ENCODE measurements at regions of chr1 and their contacts with region 1.

Region 1: GRCh38 chr1:45686317-45687013 is at the start of gene GPBP1L1:
- DNase-seq: peak; percentile 99
- ATAC-seq: peak; percentile 73
- H3K4me3 Mint-ChIP-seq: peak within 1 kb of the TSS; percentile 87
- H3K27ac Mint-ChIP-seq: peak within 1 kb of the TSS; percentile 95
- H3K4me1 Mint-ChIP-seq: peaks cover 52% of the 10 kb centered on the region
- H3K27me3 Mint-ChIP-seq: no peaks in the 10 kb centered on the region
- total RNA-seq, gene GPBP1L1: 101 to 112 TPM

Region 2: DNA sequence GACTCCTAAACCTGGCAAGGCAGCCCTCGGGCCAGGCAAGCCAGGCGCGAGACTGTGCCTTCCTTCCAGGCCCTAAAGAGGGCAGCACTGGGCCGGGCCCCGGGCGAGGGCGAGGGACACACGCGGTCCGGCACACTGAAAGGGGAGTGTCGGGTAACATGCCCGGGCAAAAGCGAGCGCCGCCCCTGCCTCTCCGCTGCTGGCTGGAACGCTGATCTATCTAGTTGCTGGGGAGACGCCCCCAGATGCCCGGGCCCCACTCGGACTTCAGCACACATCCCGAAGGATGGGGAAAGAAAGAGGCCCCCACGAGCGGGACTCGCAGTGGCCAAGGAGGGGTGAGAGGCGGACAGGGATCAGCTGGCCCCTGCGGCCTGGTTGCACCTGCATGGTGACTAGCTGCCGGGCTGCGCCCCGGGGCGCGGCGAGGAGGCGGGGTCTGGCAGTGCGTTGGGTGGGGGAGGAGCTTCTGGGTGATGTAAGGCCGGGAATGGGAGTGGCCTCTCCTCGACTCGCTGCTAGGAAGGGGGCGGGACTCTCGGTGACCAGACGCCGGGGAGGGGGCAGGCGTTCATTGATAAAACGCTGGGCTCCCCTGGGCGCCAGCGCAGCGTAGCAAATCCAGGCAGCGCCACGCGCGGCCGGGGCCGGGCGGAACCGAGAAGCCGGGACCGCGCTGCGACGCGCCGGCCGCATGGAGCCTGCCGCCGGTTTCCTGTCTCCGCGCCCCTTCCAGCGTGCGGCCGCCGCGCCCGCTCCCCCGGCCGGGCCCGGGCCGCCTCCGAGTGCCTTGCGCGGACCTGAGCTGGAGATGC is 886.5 kb before region 1 on chr1 and contains the start of gene PLK3:
- CTCF ChIA-PET with region 1: no interaction called
- POLR2A ChIA-PET with region 1: no interaction called
- intact Hi-C with region 1: loop called in 1 of 2 experiments (anchors 2 kb)
- DNase-seq: peak; percentile 99
- ATAC-seq: peak; percentile 84
- H3K4me3 Mint-ChIP-seq: peak within 1 kb of the TSS; percentile 87
- H3K27ac Mint-ChIP-seq: peak within 1 kb of the TSS; percentile 100
- H3K4me1 Mint-ChIP-seq: peaks cover 41% of the 10 kb centered on the region
- H3K27me3 Mint-ChIP-seq: no peaks in the 10 kb centered on the region
- total RNA-seq, gene PLK3: 52.1 to 52.7 TPM

Region 3: GRCh38 chr1:45266151-45266801 is 420.2 kb before region 1 on chr1:
- CTCF ChIA-PET with region 1: no interaction called
- POLR2A ChIA-PET with region 1: no interaction called
- intact Hi-C with region 1: no loop called
- DNase-seq: no peak
- ATAC-seq: no peak
- H3K4me3 Mint-ChIP-seq: no peak overlapping the region
- H3K27ac Mint-ChIP-seq: no peak overlapping the region
- H3K4me1 Mint-ChIP-seq: no peaks in the 10 kb centered on the region
- H3K27me3 Mint-ChIP-seq: peaks cover 4% of the 10 kb centered on the region

Region 4: GRCh38 chr1:45339789-45340570 is 346.5 kb before region 1 on chr1 and contains the starts of genes MUTYH and TOE1:
- CTCF ChIA-PET with region 1: interaction called, 3 read pairs
- POLR2A ChIA-PET with region 1: interaction called, 6 read pairs
- intact Hi-C with region 1: loop called in 1 of 2 experiments (anchors 1 kb)
- DNase-seq: peak; percentile 98
- ATAC-seq: peak; percentile 86
- H3K4me3 Mint-ChIP-seq: peak within 1 kb of the TSS; percentile 100
- H3K27ac Mint-ChIP-seq: peak within 1 kb of the TSS; percentile 100
- H3K4me1 Mint-ChIP-seq: peaks cover 27% of the 10 kb centered on the region
- H3K27me3 Mint-ChIP-seq: no peaks in the 10 kb centered on the region
- total RNA-seq, gene MUTYH: 48.6 to 53.7 TPM
- total RNA-seq, gene TOE1: 29.8 to 42.3 TPM

Region 5: GRCh38 chr1:45550401-45551351 is 135.8 kb before region 1 on chr1 and contains the start of gene AKR1A1:
- CTCF ChIA-PET with region 1: no interaction called
- POLR2A ChIA-PET with region 1: no interaction called
- intact Hi-C with region 1: loop called in 1 of 2 experiments (anchors 1 kb)
- DNase-seq: peak; percentile 95
- ATAC-seq: peak; percentile 94
- H3K4me3 Mint-ChIP-seq: peak within 1 kb of the TSS; percentile 94
- H3K27ac Mint-ChIP-seq: peak within 1 kb of the TSS; percentile 94
- H3K4me1 Mint-ChIP-seq: peaks cover 16% of the 10 kb centered on the region
- H3K27me3 Mint-ChIP-seq: no peaks in the 10 kb centered on the region
- total RNA-seq, gene AKR1A1: 140 to 181 TPM

Region 6: DNA sequence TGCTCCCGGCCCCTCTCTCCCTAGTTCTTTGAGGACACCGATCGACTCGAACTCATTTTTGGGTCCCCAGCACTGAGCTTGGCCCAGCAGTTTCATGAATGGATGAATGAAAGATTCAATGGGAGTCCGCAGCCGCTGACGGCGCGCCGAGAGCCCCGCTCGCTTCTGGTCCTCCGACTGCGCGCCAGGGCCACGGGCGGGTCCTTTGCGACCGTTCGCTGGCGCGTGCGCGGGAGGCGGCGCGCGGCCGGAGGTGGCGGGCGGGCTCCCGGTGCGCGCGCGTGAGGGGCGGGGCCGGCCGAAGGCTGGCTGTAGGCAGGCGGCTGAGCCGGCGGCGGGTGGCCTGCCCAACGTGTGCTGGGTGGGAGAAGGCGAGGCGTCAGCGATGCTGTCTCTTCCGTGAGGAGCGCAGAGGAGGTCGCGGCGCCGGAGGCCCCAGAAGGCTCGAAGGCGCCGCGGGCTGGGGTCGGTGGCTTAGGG is 116.9 kb after region 1 on chr1 and contains the start of gene MAST2:
- CTCF ChIA-PET with region 1: no interaction called
- POLR2A ChIA-PET with region 1: interaction called, 4 read pairs
- intact Hi-C with region 1: loop called in 1 of 2 experiments (anchors 1 kb)
- DNase-seq: peak; percentile 92
- ATAC-seq: peak; percentile 96
- H3K4me3 Mint-ChIP-seq: peak within 1 kb of the TSS; percentile 98
- H3K27ac Mint-ChIP-seq: peak within 1 kb of the TSS; percentile 82
- H3K4me1 Mint-ChIP-seq: peaks cover 27% of the 10 kb centered on the region
- H3K27me3 Mint-ChIP-seq: no peaks in the 10 kb centered on the region
- total RNA-seq, gene MAST2: 20.1 to 22.9 TPM

Region 7: GRCh38 chr1:46303038-46303871 is 616.8 kb after region 1 on chr1 and contains the starts of genes LRRC41 and UQCRH:
- CTCF ChIA-PET with region 1: no interaction called
- POLR2A ChIA-PET with region 1: interaction called, 5 read pairs
- intact Hi-C with region 1: loop called in 1 of 2 experiments (anchors 1 kb)
- DNase-seq: peak; percentile 96
- ATAC-seq: peak; percentile 88
- H3K4me3 Mint-ChIP-seq: peak within 1 kb of the TSS; percentile 95
- H3K27ac Mint-ChIP-seq: peak within 1 kb of the TSS; percentile 95
- H3K4me1 Mint-ChIP-seq: peaks cover 44% of the 10 kb centered on the region
- H3K27me3 Mint-ChIP-seq: no peaks in the 10 kb centered on the region
- total RNA-seq, gene LRRC41: 33.4 to 34.7 TPM
- total RNA-seq, gene UQCRH: 258 to 391 TPM

Measured in activated CD4-positive, alpha-beta T cell treated with anti-CD3 and anti-CD28 coated beads for 36 hours (primary cell).